Heart left ventricle (tissue), 16 donors: ENCODE measurements at regions of chr11 and their contacts with region 1.

Region 1: DNA sequence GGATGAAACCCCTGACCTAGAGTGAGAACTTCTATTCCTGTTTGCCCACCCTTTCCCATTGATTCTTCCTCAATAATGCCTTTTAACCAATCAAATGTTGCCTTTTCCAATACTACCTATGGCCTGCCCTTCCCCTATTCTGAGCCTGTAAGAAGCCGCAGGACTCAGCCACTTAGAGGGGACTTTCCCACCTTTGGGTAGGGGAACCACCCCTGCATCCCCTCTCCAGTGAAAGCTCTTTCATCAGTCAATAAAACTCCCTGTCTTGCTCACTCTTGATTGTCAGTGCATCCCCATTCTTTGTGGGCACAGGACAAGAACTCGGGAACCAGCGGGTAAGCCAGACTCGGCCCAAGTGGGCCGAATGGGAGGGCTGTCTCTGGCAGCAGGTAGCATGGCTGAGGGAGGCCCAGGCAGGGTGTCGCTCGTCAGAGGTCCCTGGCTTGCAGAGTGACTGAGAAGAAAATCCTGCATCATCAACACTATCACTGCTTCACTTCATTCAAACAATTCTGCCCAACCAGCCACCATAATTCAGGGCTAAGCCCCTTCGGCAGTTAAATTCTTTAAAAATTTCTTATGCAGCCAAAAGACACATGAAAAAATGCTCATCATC is 30.4 kb downstream of the LDHAL6A start:
- DNase-seq: no peak
- ATAC-seq: no peak
- H3K4me3 ChIP-seq: no peak overlapping the region
- H3K27ac ChIP-seq: no peak overlapping the region
- H3K4me1 ChIP-seq: peaks cover 0 to under 1% (median 0%) of the 10 kb centered on the region in 12 donors
- H3K27me3 ChIP-seq: no peaks in the 10 kb centered on the region
- CTCF ChIP-seq: no peak
- POLR2A ChIP-seq: no peak

Region 2: DNA sequence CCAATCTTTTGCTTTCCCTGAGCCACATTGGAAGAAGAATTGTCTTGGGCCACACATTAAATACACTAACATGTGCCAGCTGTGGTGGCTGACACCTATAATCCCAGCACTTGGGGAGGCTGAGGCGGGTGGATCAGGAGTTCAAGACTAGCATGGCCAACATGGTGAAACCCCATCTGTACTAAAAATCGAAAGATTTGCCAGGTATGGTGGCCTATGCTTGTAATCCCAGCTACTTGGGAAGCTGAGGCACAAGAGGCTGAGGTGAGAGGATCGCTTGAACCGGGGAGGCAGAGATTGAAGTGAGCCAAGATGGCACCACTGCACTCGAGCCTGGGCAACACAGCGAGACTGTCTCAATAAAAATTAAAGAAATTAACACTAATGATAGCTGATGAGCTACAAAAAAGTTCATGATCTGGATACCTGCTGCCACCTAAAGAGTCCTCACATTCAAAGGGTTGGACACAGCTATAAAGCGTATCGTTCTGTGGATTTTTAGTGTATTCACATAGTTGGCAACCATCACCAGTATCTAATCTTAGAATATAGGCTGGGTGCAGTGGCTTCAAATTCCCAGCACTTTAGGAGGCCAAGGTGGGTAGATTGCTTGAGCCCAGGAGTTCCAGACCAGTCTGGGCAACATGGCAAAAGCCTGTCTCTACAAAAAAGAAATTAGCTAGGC is 77.3 kb before region 1 on chr11:
- intact Hi-C with region 1: loop called in 1 of 10 experiments (anchors 5 kb)
- DNase-seq: no peak
- ATAC-seq: peak in 2 of 4 donors; percentile 33 to 40
- H3K4me3 ChIP-seq: no peak overlapping the region
- H3K27ac ChIP-seq: no peak overlapping the region
- H3K4me1 ChIP-seq: peaks cover 0 to 5% (median 0%) of the 10 kb centered on the region in 12 donors
- H3K27me3 ChIP-seq: no peaks in the 10 kb centered on the region
- CTCF ChIP-seq: no peak
- POLR2A ChIP-seq: no peak

Region 3: DNA sequence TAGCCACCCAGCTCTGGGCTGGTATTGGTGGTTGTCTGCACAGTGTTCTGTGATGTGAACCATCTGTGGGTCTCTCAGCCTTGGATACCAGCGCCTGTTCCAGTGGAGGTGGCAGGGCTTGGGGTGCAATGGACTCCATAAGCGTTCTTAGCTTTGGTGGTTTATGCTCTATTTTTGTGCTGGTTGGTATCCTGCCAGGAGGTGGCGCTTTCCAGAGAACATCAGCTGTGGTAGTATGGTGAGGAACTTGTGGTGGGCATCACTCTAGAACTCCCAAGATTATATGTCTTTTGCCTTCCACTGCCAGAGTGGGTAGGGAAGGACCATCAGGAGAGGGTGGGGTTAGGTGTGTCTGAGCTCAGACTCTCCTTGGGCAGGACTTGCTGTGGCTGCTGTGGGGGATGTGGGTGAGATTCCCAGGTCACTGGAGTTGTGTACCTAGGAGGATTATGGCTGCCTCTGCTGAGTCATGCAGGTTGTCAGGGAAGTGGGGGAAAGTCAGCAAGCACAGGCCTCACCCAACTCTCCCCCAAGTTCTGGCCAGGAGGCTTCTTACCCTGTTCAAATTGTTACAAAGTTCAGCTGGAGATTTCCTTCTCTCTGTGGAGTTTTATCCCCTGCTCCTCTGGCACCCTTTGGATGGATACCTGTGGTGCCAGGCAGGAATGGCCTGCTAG is 527.3 kb after region 1 on chr11:
- intact Hi-C with region 1: no loop called
- DNase-seq: no peak
- ATAC-seq: no peak
- H3K4me3 ChIP-seq: no peak overlapping the region
- H3K27ac ChIP-seq: no peak overlapping the region
- H3K4me1 ChIP-seq: no peaks in the 10 kb centered on the region
- H3K27me3 ChIP-seq: peaks cover 0 to 6% (median 0%) of the 10 kb centered on the region in 9 donors
- CTCF ChIP-seq: no peak
- POLR2A ChIP-seq: no peak